PC-9 (cell line): ENCODE measurements at regions of chr13 and their contacts with region 1.

Region 1: GRCh38 chr13:77521595-77522367 is 13.7 kb upstream of the SCEL start:
- DNase-seq: peak; percentile 86 to 98
- H3K4me3 ChIP-seq: peak overlapping the region; percentile 35; the same call in 1 of the 2 replicates
- H3K27ac ChIP-seq: peak overlapping the region; percentile 97
- H3K4me1 ChIP-seq: peaks cover 59% of the 10 kb centered on the region
- H3K27me3 ChIP-seq: no peaks in the 10 kb centered on the region
- CTCF ChIP-seq: peak; percentile 22; the same call in 1 of the 2 replicates

Region 2: GRCh38 chr13:77535448-77535847 is 13.7 kb after region 1 on chr13 and contains the start of gene SCEL:
- CTCF ChIA-PET with region 1: interaction called, 6 read pairs
- POLR2A ChIA-PET with region 1: interaction called, 19 read pairs
- intact Hi-C with region 1: loop called (anchors 1 kb)
- DNase-seq: peak; percentile 65 to 93
- H3K4me3 ChIP-seq: peak within 1 kb of the TSS; percentile 61
- H3K27ac ChIP-seq: peak within 1 kb of the TSS; percentile 92
- H3K4me1 ChIP-seq: peaks cover 61% of the 10 kb centered on the region
- H3K27me3 ChIP-seq: no peaks in the 10 kb centered on the region
- CTCF ChIP-seq: no peak
- total RNA-seq, gene SCEL: 19.5 and 32.5 TPM in 2 replicates

Region 3: DNA sequence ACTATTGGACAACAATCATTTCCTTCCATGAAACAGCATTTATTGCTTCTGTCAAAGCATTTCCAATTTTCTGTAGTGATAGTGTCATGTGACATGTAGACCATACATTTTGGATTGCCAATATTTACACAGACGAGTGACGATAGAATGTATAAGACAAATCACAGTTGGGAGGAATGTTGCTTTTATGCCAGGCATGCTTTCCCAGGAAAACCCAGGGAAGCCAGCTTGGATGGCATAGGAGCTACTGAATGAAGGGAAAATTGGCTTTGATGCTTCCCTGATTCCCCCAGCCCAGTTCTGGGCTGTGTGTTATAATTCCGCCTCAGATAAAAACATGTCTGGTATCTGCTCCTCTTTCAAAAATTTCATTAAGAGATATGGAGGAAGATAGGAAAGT is 36.2 kb after region 1 on chr13:
- CTCF ChIA-PET with region 1: no interaction called
- POLR2A ChIA-PET with region 1: no interaction called
- intact Hi-C with region 1: loop called (anchors 1 kb)
- DNase-seq: no peak
- H3K4me3 ChIP-seq: no peak overlapping the region
- H3K27ac ChIP-seq: peak overlapping the region; percentile 37; the same call in 1 of the 2 replicates
- H3K4me1 ChIP-seq: peaks cover 50% of the 10 kb centered on the region
- H3K27me3 ChIP-seq: no peaks in the 10 kb centered on the region
- CTCF ChIP-seq: no peak

Region 4: GRCh38 chr13:77810430-77810829 is 288.6 kb after region 1 on chr13:
- CTCF ChIA-PET with region 1: no interaction called
- POLR2A ChIA-PET with region 1: no interaction called
- intact Hi-C with region 1: no loop called
- DNase-seq: peak in 1 of 2 experiments; percentile 43
- H3K4me3 ChIP-seq: no peak overlapping the region
- H3K27ac ChIP-seq: no peak overlapping the region
- H3K4me1 ChIP-seq: 0 out of 2 replicates have a peak, but pooled peaks cover 5% of the 10 kb centered on the region
- H3K27me3 ChIP-seq: no peaks in the 10 kb centered on the region
- CTCF ChIP-seq: peak; percentile 54; the same call in 1 of the 2 replicates